Heart left ventricle (tissue), 16 donors: ENCODE measurements at regions of chr18 and their contacts with region 1.

Region 1: GRCh38 chr18:31197676-31198075 is 35.0 kb upstream of the DSC1 start:
- DNase-seq: no peak
- ATAC-seq: no peak
- H3K4me3 ChIP-seq: no peak overlapping the region
- H3K27ac ChIP-seq: no peak overlapping the region
- H3K4me1 ChIP-seq: no peaks in the 10 kb centered on the region
- H3K27me3 ChIP-seq: no peaks in the 10 kb centered on the region
- CTCF ChIP-seq: no peak
- POLR2A ChIP-seq: no peak

Region 2: GRCh38 chr18:31129398-31130115 is 68.1 kb before region 1 on chr18:
- intact Hi-C with region 1: loop called in 1 of 10 experiments (anchors 10 kb)
- DNase-seq: no peak
- ATAC-seq: no peak
- H3K4me3 ChIP-seq: no peak overlapping the region
- H3K27ac ChIP-seq: no peak overlapping the region
- H3K4me1 ChIP-seq: no peaks in the 10 kb centered on the region
- H3K27me3 ChIP-seq: no peaks in the 10 kb centered on the region
- CTCF ChIP-seq: no peak
- POLR2A ChIP-seq: no peak